ENCODE measurements at regions of chr17 and their contacts with region 1.

Region 1: GRCh38 chr17:33595828-33596227 is 302.7 kb upstream of the ASIC2 start:
- DNase-seq: peak in 1 of 2 donors; percentile 21
- H3K4me3 ChIP-seq: no peak overlapping the region
- H3K27ac ChIP-seq: no peak overlapping the region
- H3K4me1 ChIP-seq: no peaks in the 10 kb centered on the region
- H3K27me3 ChIP-seq: no peaks in the 10 kb centered on the region
- CTCF ChIP-seq: no peak
- POLR2A ChIP-seq: no peak

Region 2: DNA sequence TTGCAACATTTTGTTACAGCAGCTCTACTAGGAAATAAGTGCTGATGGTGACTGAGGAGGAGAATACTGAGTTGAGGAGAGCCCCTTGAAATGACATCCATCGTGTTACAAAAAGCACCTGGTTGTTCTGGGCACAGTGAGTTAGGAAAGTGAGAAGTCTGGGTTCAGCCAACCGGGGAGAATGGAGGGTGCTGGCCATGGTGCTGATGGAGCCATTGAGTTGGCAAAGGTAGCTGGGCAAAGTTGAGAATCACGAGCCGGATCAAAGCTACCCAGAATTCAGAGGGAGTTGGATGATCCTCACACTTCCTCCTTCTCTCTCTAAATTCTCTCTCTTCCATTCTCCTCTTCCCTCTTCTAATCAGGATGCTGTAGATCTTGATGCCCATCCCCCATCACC is 267.7 kb before region 1 on chr17:
- intact Hi-C with region 1: loop called (anchors 10 kb)
- DNase-seq: no peak
- H3K4me3 ChIP-seq: no peak overlapping the region
- H3K27ac ChIP-seq: no peak overlapping the region
- H3K4me1 ChIP-seq: no peaks in the 10 kb centered on the region
- H3K27me3 ChIP-seq: peaks cover 0 to 5% of the 10 kb centered on the region in 2 donors
- CTCF ChIP-seq: no peak
- POLR2A ChIP-seq: no peak

Region 3: DNA sequence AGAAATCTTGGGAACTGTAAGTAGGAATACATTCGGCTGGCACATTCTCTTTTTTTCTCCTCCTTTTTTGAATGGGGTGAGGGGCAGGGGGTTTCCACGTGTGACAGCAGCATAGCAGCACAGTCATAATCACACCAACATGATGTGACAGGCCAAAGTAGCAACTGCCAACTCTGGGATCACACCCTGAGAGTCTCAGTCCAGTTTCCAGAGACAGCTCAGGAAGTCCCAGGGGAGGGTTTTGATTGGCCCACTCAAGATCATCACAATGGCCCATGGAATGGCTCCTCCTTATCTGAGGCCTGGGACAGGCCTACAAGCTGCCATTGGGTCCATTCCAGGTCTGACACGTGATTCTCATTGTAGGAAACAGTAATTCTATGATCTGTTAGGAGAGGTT is 95.7 kb before region 1 on chr17:
- intact Hi-C with region 1: no loop called
- DNase-seq: no peak
- H3K4me3 ChIP-seq: no peak overlapping the region
- H3K27ac ChIP-seq: no peak overlapping the region
- H3K4me1 ChIP-seq: no peaks in the 10 kb centered on the region
- H3K27me3 ChIP-seq: no peaks in the 10 kb centered on the region
- CTCF ChIP-seq: no peak
- POLR2A ChIP-seq: no peak

Region 4: GRCh38 chr17:34990921-34991365 is 1395.1 kb after region 1 on chr17:
- intact Hi-C with region 1: no loop called
- DNase-seq: no peak
- H3K4me3 ChIP-seq: no peak overlapping the region
- H3K27ac ChIP-seq: no peak overlapping the region
- H3K4me1 ChIP-seq: no peaks in the 10 kb centered on the region
- H3K27me3 ChIP-seq: no peaks in the 10 kb centered on the region
- CTCF ChIP-seq: no peak
- POLR2A ChIP-seq: no peak